H1 (cell line): ENCODE measurements at regions of chr3 and their contacts with region 1.

Region 1: DNA sequence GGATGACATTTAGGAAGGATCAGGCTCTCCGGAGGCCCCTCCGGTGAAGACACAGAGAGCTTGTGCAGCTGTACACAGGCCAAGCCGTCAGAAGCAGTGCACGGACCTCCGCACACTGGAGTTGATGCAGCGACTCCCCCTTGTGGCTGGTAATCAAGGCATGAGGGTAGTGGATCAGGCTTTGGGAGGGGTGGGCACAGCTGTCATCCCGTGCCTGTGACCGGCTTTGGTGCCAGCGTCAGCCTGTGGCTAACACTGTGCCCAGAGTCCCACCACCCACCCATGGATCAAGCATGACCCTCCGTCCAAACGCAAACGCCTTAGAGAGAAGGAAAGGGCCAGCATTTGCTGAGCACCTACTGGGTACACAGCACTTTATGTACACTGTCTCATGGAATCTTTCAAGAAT is 8.2 kb upstream of the GRIP2 start:
- DNase-seq: peak; percentile 23 to 76
- H3K4me3 ChIP-seq: no peak overlapping the region
- H3K27ac ChIP-seq: no peak overlapping the region
- H3K4me1 ChIP-seq: peaks cover 0 to 3% (median 0%) of the 10 kb centered on the region in 4 experiments; a peak in 1 of 7 replicates
- H3K27me3 ChIP-seq: no peaks in the 10 kb centered on the region
- CTCF ChIP-seq: peak; percentile 92 to 97 (median 94)
- EP300 ChIP-seq: no peak
- POLR2A ChIP-seq: no peak
- RAD21 ChIP-seq: peak; percentile 81 to 91

Region 2: DNA sequence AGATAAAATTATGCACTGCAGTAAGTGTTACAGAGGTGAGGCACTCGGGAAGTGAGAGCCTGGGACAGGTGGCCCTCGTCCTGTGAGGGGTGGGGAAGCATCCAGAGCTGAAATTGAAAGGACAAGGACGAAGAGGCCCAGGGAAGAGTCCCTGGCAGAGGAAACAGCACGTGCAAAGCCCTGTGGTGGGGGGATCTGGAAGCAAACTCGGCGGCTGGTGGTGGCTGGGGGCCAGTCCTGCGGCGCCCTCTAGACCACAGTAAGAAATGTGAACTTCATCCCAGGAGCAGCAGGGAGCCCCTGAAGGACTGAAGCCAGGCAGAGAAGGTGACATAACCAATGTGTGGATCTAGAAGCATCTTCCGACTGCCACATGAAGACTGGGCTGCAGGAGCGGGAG is 51.0 kb before region 1 on chr3:
- CTCF ChIA-PET with region 1: interaction called, 29 read pairs
- POLR2A ChIA-PET with region 1: no interaction called
- DNase-seq: no peak
- H3K4me3 ChIP-seq: no peak overlapping the region
- H3K27ac ChIP-seq: no peak overlapping the region
- H3K4me1 ChIP-seq: no peaks in the 10 kb centered on the region
- H3K27me3 ChIP-seq: no peaks in the 10 kb centered on the region
- CTCF ChIP-seq: peak; percentile 29 to 53 (median 43); a peak in 3 of 4 replicates
- EP300 ChIP-seq: no peak
- POLR2A ChIP-seq: no peak
- RAD21 ChIP-seq: peak; percentile 63 to 73

Region 3: DNA sequence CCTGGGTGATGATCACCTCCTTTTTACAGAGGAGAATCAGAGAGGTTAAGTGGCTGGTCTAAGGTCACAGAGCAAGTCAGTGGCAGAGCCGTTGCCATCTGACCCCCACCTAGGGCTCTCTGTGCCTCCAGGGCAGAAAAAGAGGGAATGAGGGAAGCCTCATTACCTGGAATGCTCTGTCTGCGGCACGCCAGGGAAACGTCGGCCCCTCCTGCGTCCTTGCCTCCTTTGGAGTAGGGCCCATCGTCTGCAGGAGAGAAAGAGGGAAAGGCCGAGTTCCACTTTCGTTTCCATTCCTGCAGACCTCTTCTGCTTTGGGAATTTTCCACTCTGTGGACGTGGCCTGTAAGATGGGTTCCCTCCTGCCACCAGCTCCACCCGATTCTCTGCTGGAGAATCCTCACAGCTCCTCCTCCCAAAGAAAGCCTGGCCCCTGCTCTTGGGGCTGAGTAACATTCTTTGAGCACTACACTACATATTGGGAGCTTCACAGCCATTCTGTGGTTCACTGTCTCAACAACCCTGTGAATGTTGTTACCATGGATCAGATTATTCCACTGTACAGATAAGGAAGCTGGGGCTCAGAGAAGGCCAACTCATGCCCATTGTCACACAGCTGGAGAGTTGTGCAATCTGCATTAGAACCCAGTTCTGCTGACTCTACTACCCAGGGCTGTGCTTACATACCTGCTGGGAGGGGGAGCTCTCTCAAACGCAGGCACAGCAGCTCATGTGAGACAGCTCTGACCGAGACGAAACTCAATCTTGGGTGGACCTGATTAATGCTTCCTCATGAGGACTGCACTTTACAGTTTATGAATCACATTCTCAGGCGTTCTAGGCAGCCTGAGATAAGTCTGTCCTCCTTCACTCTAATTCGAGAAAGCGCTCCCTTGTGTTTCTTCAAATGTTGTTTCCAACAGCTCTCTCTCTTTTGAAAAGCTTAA is 22.4 kb before region 1 on chr3:
- CTCF ChIA-PET with region 1: interaction called, 171 read pairs
- POLR2A ChIA-PET with region 1: interaction called, 3 read pairs
- DNase-seq: no peak
- H3K4me3 ChIP-seq: no peak overlapping the region
- H3K27ac ChIP-seq: no peak overlapping the region
- H3K4me1 ChIP-seq: peaks cover 2 to 9% (median 7%) of the 10 kb centered on the region in 4 experiments
- H3K27me3 ChIP-seq: no peaks in the 10 kb centered on the region
- CTCF ChIP-seq: no peak
- EP300 ChIP-seq: no peak
- POLR2A ChIP-seq: no peak
- RAD21 ChIP-seq: no peak

Region 4: DNA sequence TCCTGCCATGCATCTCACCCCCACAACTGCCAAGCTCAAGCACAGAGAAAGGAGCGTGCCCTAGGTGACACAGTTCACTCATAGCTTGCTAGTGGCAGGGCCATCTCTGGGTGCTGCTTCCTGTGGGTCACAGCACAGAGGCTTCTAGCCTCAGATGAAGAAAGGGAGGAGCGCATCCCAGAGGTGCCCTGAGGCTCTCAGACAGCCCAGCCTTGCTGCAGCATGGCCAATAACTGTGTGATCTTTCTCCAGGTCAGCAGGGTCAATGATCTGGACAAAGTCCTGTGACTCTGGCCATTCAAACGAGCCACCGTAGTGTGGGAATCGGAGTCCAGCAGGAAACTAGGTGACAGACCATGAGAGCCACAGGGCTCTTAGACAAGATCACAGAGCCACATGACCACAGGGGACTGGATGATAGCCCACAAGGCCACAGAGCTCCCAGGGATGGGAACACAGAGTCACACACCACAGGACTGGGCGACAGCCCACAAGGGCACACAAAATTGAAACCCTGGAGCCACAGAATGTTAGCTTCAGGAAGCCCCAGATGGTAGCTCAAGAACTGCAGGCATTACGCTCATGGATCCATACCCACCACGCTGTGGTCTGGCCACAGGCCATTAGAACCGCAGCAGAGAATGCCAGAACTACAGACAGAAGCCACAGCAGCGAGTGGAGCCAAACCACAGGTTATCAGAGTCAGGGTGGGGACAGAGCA is 17.7 kb after region 1 on chr3:
- CTCF ChIA-PET with region 1: interaction called, 40 read pairs
- POLR2A ChIA-PET with region 1: interaction called, 4 read pairs
- DNase-seq: no peak
- H3K4me3 ChIP-seq: no peak overlapping the region
- H3K27ac ChIP-seq: no peak overlapping the region
- H3K4me1 ChIP-seq: peaks cover 6 to 27% (median 10%) of the 10 kb centered on the region in 4 experiments
- H3K27me3 ChIP-seq: no peaks in the 10 kb centered on the region
- CTCF ChIP-seq: no peak
- EP300 ChIP-seq: no peak
- POLR2A ChIP-seq: no peak
- RAD21 ChIP-seq: no peak

Region 5: DNA sequence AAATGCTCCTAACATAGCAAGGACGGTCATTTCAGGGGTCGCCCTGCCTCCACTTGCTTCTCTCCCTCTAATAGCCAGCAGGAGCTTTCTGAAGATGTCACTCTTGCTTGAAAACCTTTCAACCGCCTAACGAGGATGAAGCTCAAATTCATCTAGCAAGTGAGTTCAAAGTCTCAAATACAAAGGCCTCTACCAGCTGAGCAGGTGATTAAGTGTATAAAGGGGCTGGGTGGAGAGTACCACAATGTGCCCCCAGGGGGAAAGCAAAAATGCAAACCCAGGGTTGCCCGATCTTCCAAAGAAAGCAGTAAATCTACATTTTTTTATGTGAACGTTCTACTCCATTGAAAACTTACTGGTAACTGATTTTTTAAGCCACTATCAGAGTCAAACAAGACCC is 42.2 kb after region 1 on chr3:
- CTCF ChIA-PET with region 1: interaction called, 13 read pairs
- POLR2A ChIA-PET with region 1: no interaction called
- DNase-seq: no peak
- H3K4me3 ChIP-seq: no peak overlapping the region
- H3K27ac ChIP-seq: no peak overlapping the region
- H3K4me1 ChIP-seq: peaks cover 0 to 2% (median 0%) of the 10 kb centered on the region in 4 experiments; a peak in 2 of 7 replicates
- H3K27me3 ChIP-seq: no peaks in the 10 kb centered on the region
- CTCF ChIP-seq: no peak
- EP300 ChIP-seq: no peak
- POLR2A ChIP-seq: no peak
- RAD21 ChIP-seq: no peak

Region 6: GRCh38 chr3:14680716-14681115 is 132.4 kb after region 1 on chr3:
- CTCF ChIA-PET with region 1: no interaction called
- POLR2A ChIA-PET with region 1: no interaction called
- DNase-seq: no peak
- H3K4me3 ChIP-seq: no peak overlapping the region
- H3K27ac ChIP-seq: no peak overlapping the region
- H3K4me1 ChIP-seq: no peaks in the 10 kb centered on the region
- H3K27me3 ChIP-seq: no peaks in the 10 kb centered on the region
- CTCF ChIP-seq: no peak
- EP300 ChIP-seq: no peak
- POLR2A ChIP-seq: no peak
- RAD21 ChIP-seq: no peak